Upper lobe of right lung (tissue), 1 donor: ENCODE measurements at regions of chr12 and their contacts with region 1.

Region 1: GRCh38 chr12:15276088-15276698 is 46.1 kb upstream of the PTPRO start:
- DNase-seq: no peak
- ATAC-seq: peak; percentile 57
- H3K4me3 ChIP-seq: no peak overlapping the region
- H3K27ac ChIP-seq: no peak overlapping the region
- H3K4me1 ChIP-seq: peaks cover 19% of the 10 kb centered on the region
- H3K27me3 ChIP-seq: no peaks in the 10 kb centered on the region
- CTCF ChIP-seq: peak; percentile 78

Region 2: DNA sequence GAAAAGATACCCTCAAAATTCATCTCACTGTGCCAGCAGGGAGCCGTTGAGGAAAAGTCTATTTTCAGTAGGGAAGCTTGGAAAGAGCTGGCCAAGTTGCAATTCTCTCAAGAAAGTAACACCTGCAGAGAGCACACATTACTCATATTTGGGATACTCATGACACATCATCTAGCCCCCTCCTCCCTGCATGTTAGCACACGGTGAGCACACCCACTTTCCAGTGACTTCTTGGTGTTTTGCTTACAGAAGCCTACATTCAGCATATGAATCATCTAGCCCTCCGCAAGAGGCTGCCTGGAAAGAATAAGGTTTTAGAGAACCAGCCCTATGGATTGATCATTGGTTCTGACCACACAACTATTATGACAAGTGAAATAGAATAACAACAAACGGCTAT is 170.6 kb after region 1 on chr12:
- intact Hi-C with region 1: no loop called
- DNase-seq: no peak
- ATAC-seq: no peak
- H3K4me3 ChIP-seq: no peak overlapping the region
- H3K27ac ChIP-seq: no peak overlapping the region
- H3K4me1 ChIP-seq: no peaks in the 10 kb centered on the region
- H3K27me3 ChIP-seq: no peaks in the 10 kb centered on the region
- CTCF ChIP-seq: no peak

Region 3: GRCh38 chr12:15584366-15585041 is 308.3 kb after region 1 on chr12:
- intact Hi-C with region 1: loop called (anchors 5 kb)
- DNase-seq: no peak
- ATAC-seq: peak; percentile 68
- H3K4me3 ChIP-seq: no peak overlapping the region
- H3K27ac ChIP-seq: no peak overlapping the region
- H3K4me1 ChIP-seq: no peaks in the 10 kb centered on the region
- H3K27me3 ChIP-seq: no peaks in the 10 kb centered on the region
- CTCF ChIP-seq: peak; percentile 72

Region 4: GRCh38 chr12:15856097-15856982 is 580.1 kb after region 1 on chr12:
- intact Hi-C with region 1: loop called (anchors 10 kb)
- DNase-seq: no peak
- ATAC-seq: peak; percentile 66
- H3K4me3 ChIP-seq: no peak overlapping the region
- H3K27ac ChIP-seq: no peak overlapping the region
- H3K4me1 ChIP-seq: no peaks in the 10 kb centered on the region
- H3K27me3 ChIP-seq: no peaks in the 10 kb centered on the region
- CTCF ChIP-seq: peak; percentile 82